IMR-90 (cell line): ENCODE measurements at regions of chr2 and their contacts with region 1.

Region 1: DNA sequence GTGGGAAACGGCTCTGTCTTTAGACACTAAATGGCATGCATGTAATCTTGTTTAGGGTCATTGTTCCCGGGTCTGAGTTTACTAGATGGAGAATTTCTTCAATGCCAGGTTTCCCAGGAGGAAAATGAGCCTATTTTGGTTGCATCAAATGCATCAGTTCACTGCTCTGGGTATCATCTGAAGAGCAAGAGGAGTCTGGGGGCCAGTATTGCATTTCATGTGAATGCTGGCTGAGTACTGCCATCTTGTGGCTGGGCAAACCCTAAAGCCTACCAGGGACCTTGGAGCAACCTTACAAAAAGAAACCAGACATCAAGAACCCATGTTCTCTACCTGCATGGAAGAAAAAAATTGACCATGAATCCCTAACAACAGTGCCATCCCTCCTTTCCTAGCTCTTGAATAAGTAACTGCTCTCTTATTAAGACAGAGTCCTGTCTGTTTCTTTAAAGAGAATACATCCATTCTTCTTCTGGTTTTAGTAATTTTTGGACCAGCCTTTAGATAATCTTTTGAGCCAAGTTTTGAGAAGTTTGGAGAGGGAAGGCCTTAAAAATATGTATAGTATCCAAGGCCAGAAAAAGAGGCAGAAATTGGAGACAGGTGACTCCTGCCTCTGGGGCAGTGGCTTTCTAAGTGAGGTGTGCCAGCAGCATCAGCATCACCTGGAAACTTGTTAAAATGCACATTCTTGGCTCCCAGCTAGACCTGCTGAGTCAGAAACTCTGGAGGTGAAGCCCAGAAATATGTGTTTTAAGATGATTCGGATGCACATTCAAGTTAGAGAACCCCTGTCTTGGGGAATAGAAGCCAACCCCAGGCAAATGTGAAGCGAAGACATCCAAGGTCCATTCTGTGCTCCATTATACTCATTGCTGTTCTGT is 261.0 kb upstream of the CXCR4 start:
- DNase-seq: peak; percentile 36
- ATAC-seq: peak; percentile 70
- H3K4me3 ChIP-seq: no peak overlapping the region
- H3K27ac ChIP-seq: no peak overlapping the region
- H3K4me1 ChIP-seq: no peaks in the 10 kb centered on the region
- H3K27me3 ChIP-seq: no peaks in the 10 kb centered on the region
- CTCF ChIP-seq: peak; percentile 52
- POLR2A ChIP-seq: no peak
- RAD21 ChIP-seq: peak; percentile 63

Region 2: GRCh38 chr2:135818937-135819610 is 559.9 kb before region 1 on chr2:
- CTCF ChIA-PET with region 1: no interaction called
- POLR2A ChIA-PET with region 1: no interaction called
- dilution Hi-C with region 1: no loop called
- in situ Hi-C with region 1: no loop called
- intact Hi-C with region 1: loop called (anchors 5 kb)
- DNase-seq: peak; percentile 50
- ATAC-seq: peak; percentile 67
- H3K4me3 ChIP-seq: no peak overlapping the region
- H3K27ac ChIP-seq: no peak overlapping the region
- H3K4me1 ChIP-seq: peaks cover 6% of the 10 kb centered on the region; the same call in 1 of the 2 replicates
- H3K27me3 ChIP-seq: no peaks in the 10 kb centered on the region
- CTCF ChIP-seq: peak; percentile 45
- POLR2A ChIP-seq: no peak
- RAD21 ChIP-seq: peak; percentile 17; the same call in 1 of the 2 replicates